Activated CD4-positive, alpha-beta T cell treated with anti-CD3 and anti-CD28 coated beads, Interleukin-2, amount 10 ng/mL, durations not matched to agents 7 days and 5 days (primary cell): ENCODE measurements at regions of chr17 and their contacts with region 1.

Region 1: DNA sequence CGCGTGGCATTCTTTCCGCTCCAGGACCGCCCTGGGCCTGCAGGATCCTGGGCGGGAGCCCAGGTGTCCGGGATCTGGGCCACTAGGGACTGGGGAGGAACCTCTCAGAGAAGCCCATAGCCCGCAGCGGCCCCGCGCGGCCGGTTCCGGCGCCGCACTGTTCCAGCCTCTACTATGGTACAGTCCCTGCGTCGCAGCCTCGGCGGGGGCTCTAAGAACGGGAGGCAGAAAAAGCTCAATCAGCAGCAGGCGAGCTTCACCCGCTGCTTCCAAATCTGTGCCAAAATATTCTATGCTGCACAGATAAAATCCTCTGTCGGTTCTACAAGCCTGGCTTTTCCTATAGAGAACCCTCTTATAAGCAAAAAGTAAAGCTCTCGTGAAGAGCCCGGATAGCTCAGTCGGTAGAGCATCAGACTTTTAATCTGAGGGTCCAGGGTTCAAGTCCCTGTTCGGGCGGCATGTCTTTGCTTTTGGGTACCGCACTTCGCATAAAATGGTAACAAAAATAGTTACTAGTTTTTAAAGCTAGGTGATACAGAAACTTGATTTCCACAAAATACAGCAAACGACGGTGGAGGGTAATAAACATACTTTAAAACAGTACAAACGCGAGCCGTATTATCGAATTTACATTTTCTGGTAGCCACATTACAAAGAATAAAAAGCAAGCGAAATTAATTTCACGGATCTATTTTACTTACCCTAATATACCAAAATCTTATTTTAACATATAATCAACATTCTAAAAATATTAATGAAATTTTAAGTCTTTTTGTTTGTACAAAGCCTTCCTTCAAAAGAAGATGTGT is 661 bp upstream of the ALOXE3 start:
- DNase-seq: peak; percentile 86
- H3K4me3 Mint-ChIP-seq: peak overlapping the region; percentile 85
- H3K27ac Mint-ChIP-seq: peak overlapping the region; percentile 88
- H3K4me1 Mint-ChIP-seq: peaks cover 53% of the 10 kb centered on the region
- H3K27me3 Mint-ChIP-seq: peaks cover 65% of the 10 kb centered on the region

Region 2: GRCh38 chr17:8016632-8017478 is 102.1 kb before region 1 on chr17:
- CTCF ChIA-PET with region 1: no interaction called
- POLR2A ChIA-PET with region 1: no interaction called
- DNase-seq: peak; percentile 68
- H3K4me3 Mint-ChIP-seq: peak overlapping the region; percentile 66
- H3K27ac Mint-ChIP-seq: no peak overlapping the region
- H3K4me1 Mint-ChIP-seq: peaks cover 11% of the 10 kb centered on the region
- H3K27me3 Mint-ChIP-seq: peaks cover 21% of the 10 kb centered on the region

Region 3: DNA sequence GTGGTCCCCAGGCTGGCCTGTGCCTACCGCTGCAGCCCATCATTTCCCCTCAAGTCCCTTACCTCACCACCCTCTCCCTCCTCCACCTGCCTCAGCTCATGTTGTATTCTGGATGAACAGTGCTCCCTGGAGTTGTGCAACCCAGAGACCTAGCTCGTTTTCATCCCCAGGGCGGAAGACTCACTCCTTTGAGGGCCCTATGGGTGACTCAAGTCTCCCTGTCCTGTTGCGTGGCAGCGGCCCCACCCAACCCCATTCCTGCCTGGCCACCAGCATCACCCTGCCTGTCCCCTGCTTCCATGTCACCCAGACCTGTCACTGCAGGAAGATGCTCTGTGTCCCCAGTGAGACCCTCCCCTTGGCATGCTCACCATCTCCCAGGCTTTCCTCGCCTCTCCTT is 34.7 kb before region 1 on chr17:
- CTCF ChIA-PET with region 1: interaction called, 14 read pairs
- POLR2A ChIA-PET with region 1: no interaction called
- DNase-seq: no peak
- H3K4me3 Mint-ChIP-seq: no peak overlapping the region
- H3K27ac Mint-ChIP-seq: no peak overlapping the region
- H3K4me1 Mint-ChIP-seq: peaks cover 15% of the 10 kb centered on the region
- H3K27me3 Mint-ChIP-seq: peaks cover 7% of the 10 kb centered on the region

Region 4: GRCh38 chr17:8131844-8132441 is 13.0 kb after region 1 on chr17:
- CTCF ChIA-PET with region 1: interaction called, 29 read pairs
- POLR2A ChIA-PET with region 1: no interaction called
- DNase-seq: no peak
- H3K4me3 Mint-ChIP-seq: no peak overlapping the region
- H3K27ac Mint-ChIP-seq: no peak overlapping the region
- H3K4me1 Mint-ChIP-seq: peaks cover 6% of the 10 kb centered on the region
- H3K27me3 Mint-ChIP-seq: peaks cover 17% of the 10 kb centered on the region

Region 5: GRCh38 chr17:8156246-8156992 is 37.4 kb after region 1 on chr17:
- CTCF ChIA-PET with region 1: interaction called, 14 read pairs
- POLR2A ChIA-PET with region 1: no interaction called
- DNase-seq: peak; percentile 100
- H3K4me3 Mint-ChIP-seq: no peak overlapping the region
- H3K27ac Mint-ChIP-seq: no peak overlapping the region
- H3K4me1 Mint-ChIP-seq: peaks cover 51% of the 10 kb centered on the region
- H3K27me3 Mint-ChIP-seq: no peaks in the 10 kb centered on the region

Region 6: DNA sequence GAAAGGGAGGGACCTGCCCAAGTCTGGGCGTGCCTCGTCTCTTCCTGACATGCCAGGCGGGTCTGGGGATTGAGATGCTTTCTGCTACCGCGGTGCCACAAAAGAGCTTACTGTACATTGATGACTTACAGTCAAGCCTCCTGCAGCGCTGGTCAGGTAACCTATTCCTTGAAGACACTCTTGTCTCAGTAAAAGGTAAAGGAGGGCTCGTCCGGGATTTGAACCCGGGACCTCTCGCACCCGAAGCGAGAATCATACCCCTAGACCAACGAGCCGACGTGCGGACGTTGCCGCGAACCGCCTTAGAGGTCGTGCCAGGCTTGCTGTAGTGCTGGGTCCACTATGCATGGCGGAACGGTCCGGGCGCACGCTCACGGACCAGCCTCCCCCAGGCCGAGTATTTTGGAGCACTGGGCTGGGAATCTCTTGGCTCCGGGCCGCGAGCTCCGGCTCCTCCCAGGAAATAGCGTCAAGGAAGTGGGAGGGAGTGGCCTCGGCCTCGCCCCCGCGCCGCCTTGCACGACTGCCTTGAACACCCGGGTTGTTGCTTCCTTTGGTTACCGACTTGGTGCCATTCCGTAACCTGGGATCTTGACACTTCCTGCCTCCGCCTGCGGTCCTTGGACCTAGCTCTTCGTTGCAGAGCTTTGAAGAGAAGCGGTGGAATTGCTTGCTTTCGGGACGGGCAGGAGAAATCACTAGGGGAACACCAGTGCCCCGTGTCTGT is 103.8 kb after region 1 on chr17:
- CTCF ChIA-PET with region 1: interaction called, 16 read pairs
- POLR2A ChIA-PET with region 1: no interaction called
- DNase-seq: peak; percentile 91
- H3K4me3 Mint-ChIP-seq: peak overlapping the region; percentile 95
- H3K27ac Mint-ChIP-seq: peak overlapping the region; percentile 99
- H3K4me1 Mint-ChIP-seq: peaks cover 72% of the 10 kb centered on the region
- H3K27me3 Mint-ChIP-seq: no peaks in the 10 kb centered on the region